ENCODE measurements at regions of chr2 and their contacts with region 1.

Region 1: GRCh38 chr2:10097352-10098148 is 17.3 kb upstream of the CYS1 start:
- DNase-seq: peak; percentile 82
- ATAC-seq: peak; percentile 96
- H3K4me3 Mint-ChIP-seq: no peak overlapping the region
- H3K27ac Mint-ChIP-seq: no peak overlapping the region
- H3K4me1 Mint-ChIP-seq: peaks cover 31% of the 10 kb centered on the region
- H3K27me3 Mint-ChIP-seq: peaks cover under 1% of the 10 kb centered on the region; the same call in 1 of the 2 replicates
- CTCF ChIP-seq: peak; percentile 85; the same call in 1 of the 2 replicates

Region 2: DNA sequence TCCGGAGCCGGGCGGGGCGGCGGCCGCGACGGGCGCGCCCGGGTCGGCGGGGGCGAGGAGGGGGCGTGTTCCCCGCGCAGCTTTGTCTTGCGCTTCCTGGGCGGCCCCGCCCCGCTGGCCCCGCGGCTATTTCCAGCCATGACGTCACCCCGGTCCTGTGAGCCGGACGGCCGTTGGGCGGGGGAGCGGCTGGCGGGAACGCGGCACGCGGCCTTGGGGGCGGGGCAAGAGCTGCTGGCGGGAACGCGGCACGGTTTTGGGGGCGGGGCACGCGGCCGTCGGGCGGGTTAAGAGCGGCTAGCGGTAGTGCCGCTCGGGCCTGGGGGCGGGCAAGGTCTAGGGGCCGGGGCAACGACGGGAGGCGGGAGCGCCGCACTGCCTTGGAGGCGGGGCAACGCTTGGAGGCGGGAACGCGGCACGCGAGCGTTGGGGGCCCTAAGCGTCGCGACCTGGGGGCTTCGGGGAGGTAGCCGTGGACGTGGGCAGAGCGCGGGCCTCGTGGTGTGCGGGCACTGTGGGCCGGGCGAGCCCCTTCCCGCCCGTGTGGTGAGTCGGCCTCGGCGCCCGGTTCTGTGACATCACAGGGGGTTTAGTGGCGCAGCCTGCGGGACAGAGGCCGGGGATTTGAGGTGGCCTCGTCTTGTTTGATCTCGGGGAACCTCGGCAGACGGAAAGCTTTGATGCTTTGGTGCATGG is 53.5 kb before region 1 on chr2:
- CTCF ChIA-PET with region 1: interaction called, 14 read pairs
- POLR2A ChIA-PET with region 1: no interaction called
- DNase-seq: peak; percentile 95
- ATAC-seq: peak; percentile 63
- H3K4me3 Mint-ChIP-seq: peak overlapping the region; percentile 49
- H3K27ac Mint-ChIP-seq: no peak overlapping the region
- H3K4me1 Mint-ChIP-seq: peaks cover 10% of the 10 kb centered on the region
- H3K27me3 Mint-ChIP-seq: peaks cover 38% of the 10 kb centered on the region
- CTCF ChIP-seq: no peak

Region 3: DNA sequence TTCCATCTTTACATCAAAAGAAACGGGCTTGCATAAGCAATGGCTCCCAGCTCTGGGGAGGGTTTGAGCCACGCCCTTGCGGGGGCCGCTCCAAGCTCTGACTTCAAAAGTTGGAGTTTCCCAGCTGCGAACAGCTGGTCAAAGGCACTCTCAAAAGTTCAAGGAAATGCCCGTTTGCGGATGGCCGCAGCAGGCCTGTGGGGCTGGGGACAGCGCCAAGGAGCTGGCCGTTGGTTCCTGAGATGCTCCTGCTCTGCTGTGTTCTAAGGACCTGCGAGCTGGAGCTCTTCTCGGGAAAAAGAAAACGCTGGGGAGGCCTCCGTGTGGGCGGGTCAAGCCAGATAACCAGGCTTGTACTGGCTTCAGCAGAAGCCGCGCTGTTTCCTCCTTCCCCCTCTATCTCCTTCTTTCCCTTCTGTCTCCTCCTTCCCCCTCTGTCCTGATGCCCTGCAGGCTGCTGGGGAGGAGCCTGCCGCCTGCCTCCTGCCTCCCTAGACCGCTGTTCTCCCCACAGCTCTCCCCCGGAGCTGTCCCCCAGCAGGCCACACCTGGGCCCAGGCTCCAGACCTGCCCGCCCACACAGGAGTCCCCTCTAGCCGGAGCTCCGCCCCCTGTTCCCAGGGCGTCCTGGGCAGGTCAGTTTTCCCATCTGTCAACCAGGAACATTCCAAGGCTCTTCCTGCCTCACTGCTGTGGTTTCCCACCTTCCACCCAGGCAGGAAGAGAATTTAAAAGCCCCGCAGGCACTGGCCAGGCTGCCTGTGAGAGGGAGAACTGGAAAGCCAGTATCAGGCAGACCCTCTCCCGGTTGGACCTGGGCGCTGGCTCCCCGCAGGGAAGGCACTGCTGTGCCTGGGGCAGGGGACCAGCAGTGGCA is 40.1 kb before region 1 on chr2:
- CTCF ChIA-PET with region 1: interaction called, 25 read pairs
- POLR2A ChIA-PET with region 1: interaction called, 5 read pairs
- DNase-seq: peak; percentile 92
- ATAC-seq: peak; percentile 94
- H3K4me3 Mint-ChIP-seq: peak overlapping the region; percentile 85
- H3K27ac Mint-ChIP-seq: peak overlapping the region; percentile 98
- H3K4me1 Mint-ChIP-seq: peaks cover 28% of the 10 kb centered on the region
- H3K27me3 Mint-ChIP-seq: no peaks in the 10 kb centered on the region
- CTCF ChIP-seq: no peak

Region 4: GRCh38 chr2:10064932-10065772 is 32.4 kb before region 1 on chr2:
- CTCF ChIA-PET with region 1: interaction called, 17 read pairs
- POLR2A ChIA-PET with region 1: no interaction called
- DNase-seq: peak; percentile 28
- ATAC-seq: peak; percentile 80
- H3K4me3 Mint-ChIP-seq: no peak overlapping the region
- H3K27ac Mint-ChIP-seq: peak overlapping the region; percentile 85; the same call in 1 of the 2 replicates
- H3K4me1 Mint-ChIP-seq: peaks cover 10% of the 10 kb centered on the region
- H3K27me3 Mint-ChIP-seq: no peaks in the 10 kb centered on the region
- CTCF ChIP-seq: no peak

Region 5: DNA sequence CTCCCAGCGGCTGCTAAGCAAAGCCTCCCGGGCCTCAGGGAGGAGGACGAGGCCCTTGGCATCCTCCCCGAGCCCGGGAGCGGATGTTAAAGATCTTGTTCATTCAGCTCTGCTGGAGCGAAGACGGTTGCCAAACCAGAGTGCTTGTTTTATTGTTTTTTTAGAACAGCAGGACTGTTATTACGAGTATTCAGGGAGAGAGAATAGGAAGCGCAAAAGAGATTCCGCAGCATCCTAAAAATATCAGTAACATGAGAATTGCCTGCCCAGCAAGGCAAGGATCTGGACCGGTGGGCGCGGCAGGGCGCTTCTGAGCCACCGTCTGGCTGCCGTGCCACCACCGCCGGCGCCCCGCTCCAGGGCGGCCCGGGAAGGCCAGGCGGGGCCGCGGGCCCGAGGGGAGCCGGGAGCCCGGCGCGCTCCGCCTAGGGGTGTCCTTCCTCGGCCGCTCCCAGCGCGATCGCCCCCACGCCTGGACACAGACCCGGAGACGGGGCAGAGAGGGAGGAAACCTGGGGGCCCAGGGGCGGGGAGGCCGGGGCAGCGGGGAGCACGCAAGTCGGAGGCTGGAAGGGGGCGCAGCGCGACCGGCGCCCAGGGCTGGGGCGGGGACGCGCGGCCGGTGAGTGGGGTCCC is 18.2 kb before region 1 on chr2:
- CTCF ChIA-PET with region 1: interaction called, 166 read pairs
- POLR2A ChIA-PET with region 1: interaction called, 3 read pairs
- DNase-seq: peak; percentile 36
- ATAC-seq: peak; percentile 56
- H3K4me3 Mint-ChIP-seq: peak overlapping the region; percentile 86
- H3K27ac Mint-ChIP-seq: no peak overlapping the region
- H3K4me1 Mint-ChIP-seq: peaks cover 16% of the 10 kb centered on the region
- H3K27me3 Mint-ChIP-seq: peaks cover 59% of the 10 kb centered on the region
- CTCF ChIP-seq: no peak

Region 6: GRCh38 chr2:10149635-10150034 is 52.1 kb after region 1 on chr2:
- CTCF ChIA-PET with region 1: no interaction called
- POLR2A ChIA-PET with region 1: no interaction called
- DNase-seq: no peak
- ATAC-seq: no peak
- H3K4me3 Mint-ChIP-seq: no peak overlapping the region
- H3K27ac Mint-ChIP-seq: no peak overlapping the region; the same call in 1 of the 2 replicates
- H3K4me1 Mint-ChIP-seq: no peaks in the 10 kb centered on the region
- H3K27me3 Mint-ChIP-seq: no peaks in the 10 kb centered on the region
- CTCF ChIP-seq: no peak

Region 7: DNA sequence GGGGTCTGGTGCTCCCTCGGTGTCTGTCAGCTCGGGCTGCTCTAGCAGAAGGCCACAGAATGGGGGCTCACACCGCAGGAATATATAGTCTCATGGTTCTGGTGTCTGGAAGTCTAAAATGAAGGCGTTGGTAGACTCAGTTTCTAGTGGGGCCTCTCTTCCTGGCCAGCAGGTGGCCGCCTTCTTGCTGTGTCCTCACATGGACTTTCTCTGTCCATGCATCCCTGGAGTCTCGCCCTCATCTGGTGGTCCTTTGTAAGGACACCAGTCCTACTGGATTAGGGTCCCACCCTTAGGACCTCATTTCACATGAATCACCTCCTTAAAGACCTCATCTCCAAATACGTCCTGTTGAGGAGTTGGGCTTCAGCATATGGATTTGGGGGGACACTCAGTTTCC is 90.7 kb after region 1 on chr2:
- CTCF ChIA-PET with region 1: no interaction called
- POLR2A ChIA-PET with region 1: no interaction called
- DNase-seq: no peak
- ATAC-seq: peak; percentile 63
- H3K4me3 Mint-ChIP-seq: no peak overlapping the region
- H3K27ac Mint-ChIP-seq: no peak overlapping the region
- H3K4me1 Mint-ChIP-seq: no peaks in the 10 kb centered on the region
- H3K27me3 Mint-ChIP-seq: no peaks in the 10 kb centered on the region
- CTCF ChIP-seq: peak; percentile 28; the same call in 1 of the 2 replicates